Sigmoid colon (tissue), 7 donors: ENCODE measurements at regions of chr7 and their contacts with region 1.

Region 1: DNA sequence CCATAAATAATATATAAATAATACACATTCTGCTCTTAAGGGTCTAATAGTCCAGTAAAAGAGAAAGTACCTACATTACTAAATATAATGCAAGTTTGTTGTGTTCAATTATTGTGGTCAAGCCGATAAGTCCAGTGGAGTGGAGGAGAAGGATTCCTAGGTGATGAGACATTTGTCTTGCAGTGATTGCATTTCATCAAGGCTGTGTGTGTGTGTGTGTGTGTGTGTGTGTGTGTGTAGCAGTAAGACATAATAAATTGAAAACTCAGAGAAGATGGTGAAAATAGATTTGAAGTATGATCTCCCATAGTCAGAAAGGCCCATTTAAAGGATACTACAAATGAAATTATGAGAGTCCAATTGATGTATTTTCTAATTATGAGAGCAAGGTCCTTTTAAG is 192.5 kb upstream of the SEMA3C start:
- DNase-seq: no peak
- H3K4me3 ChIP-seq: no peak overlapping the region
- H3K27ac ChIP-seq: peak overlapping the region in 3 of 4 donors; percentile 60 to 74 (median 74)
- H3K4me1 ChIP-seq: peaks cover 0 to 54% (median 26%) of the 10 kb centered on the region in 4 donors
- H3K27me3 ChIP-seq: no peaks in the 10 kb centered on the region
- CTCF ChIP-seq: no peak
- EP300 ChIP-seq: no peak
- POLR2A ChIP-seq: no peak

Region 2: DNA sequence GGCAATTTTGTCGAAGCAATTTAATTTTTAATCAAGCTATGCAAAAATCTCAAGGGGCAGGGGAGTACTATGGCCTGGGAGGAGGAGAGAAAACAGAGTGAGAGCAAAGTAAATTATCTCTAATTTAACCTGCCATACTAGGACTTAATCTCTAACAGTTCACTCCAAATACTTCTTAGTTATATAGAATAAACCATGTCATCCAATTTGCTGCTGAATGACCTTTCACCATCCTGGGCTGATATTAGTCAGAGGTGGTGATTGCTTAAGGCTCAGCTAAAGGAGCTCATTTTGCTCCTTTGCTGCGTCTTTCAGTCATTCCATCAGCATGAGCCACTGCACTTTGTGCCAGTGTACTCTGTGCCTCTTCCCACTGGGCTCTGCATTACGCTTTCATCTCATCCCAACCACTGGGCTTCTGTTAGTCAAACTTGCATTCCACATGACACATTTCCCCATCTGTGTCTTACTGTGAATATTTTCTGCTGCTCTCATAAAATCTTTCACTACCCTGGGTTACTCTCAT is 388.7 kb before region 1 on chr7:
- intact Hi-C with region 1: loop called (anchors 10 kb)
- DNase-seq: peak; percentile 89
- H3K4me3 ChIP-seq: no peak overlapping the region
- H3K27ac ChIP-seq: peak overlapping the region; percentile 66 to 83 (median 78)
- H3K4me1 ChIP-seq: peaks cover 0 to 41% (median 36%) of the 10 kb centered on the region in 4 donors
- H3K27me3 ChIP-seq: no peaks in the 10 kb centered on the region
- CTCF ChIP-seq: no peak
- EP300 ChIP-seq: peak in 1 of 4 donors; percentile 21
- POLR2A ChIP-seq: no peak

Region 3: DNA sequence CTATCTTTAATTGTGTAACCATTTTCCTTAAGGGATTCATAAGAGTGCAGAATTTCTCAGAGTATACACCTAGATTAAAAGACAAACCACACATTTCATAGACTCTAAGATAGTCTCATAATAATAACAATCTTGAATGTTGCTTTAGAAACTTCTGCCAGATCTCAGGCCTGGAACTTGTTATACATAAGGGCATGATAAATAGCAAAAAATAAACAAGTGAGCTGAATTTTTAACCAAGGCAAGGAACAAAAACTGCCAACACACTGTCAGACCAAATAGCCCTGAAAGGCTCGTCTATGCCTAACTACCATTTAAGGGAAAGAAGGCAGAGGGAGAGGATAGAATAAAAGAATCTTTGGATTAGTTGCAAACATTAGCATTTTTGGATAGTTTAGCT is 126.7 kb before region 1 on chr7:
- intact Hi-C with region 1: loop called (anchors 5 kb)
- DNase-seq: no peak
- H3K4me3 ChIP-seq: no peak overlapping the region
- H3K27ac ChIP-seq: peak overlapping the region in 3 of 4 donors; percentile 57 to 71 (median 64)
- H3K4me1 ChIP-seq: peaks cover 0 to 22% (median 2%) of the 10 kb centered on the region in 4 donors
- H3K27me3 ChIP-seq: no peaks in the 10 kb centered on the region
- CTCF ChIP-seq: no peak
- EP300 ChIP-seq: no peak
- POLR2A ChIP-seq: no peak

Region 4: GRCh38 chr7:81659697-81660395 is 548.5 kb after region 1 on chr7:
- intact Hi-C with region 1: no loop called
- DNase-seq: no peak
- H3K4me3 ChIP-seq: no peak overlapping the region
- H3K27ac ChIP-seq: no peak overlapping the region
- H3K4me1 ChIP-seq: no peaks in the 10 kb centered on the region
- H3K27me3 ChIP-seq: no peaks in the 10 kb centered on the region
- CTCF ChIP-seq: no peak
- EP300 ChIP-seq: no peak
- POLR2A ChIP-seq: no peak

Region 5: GRCh38 chr7:81873559-81873958 is 762.2 kb after region 1 on chr7:
- intact Hi-C with region 1: no loop called
- DNase-seq: no peak
- H3K4me3 ChIP-seq: no peak overlapping the region
- H3K27ac ChIP-seq: no peak overlapping the region
- H3K4me1 ChIP-seq: no peaks in the 10 kb centered on the region
- H3K27me3 ChIP-seq: no peaks in the 10 kb centered on the region
- CTCF ChIP-seq: no peak
- EP300 ChIP-seq: no peak
- POLR2A ChIP-seq: no peak